MCF 10A (cell line): ENCODE measurements at regions of chr2 and their contacts with region 1.

Region 1: DNA sequence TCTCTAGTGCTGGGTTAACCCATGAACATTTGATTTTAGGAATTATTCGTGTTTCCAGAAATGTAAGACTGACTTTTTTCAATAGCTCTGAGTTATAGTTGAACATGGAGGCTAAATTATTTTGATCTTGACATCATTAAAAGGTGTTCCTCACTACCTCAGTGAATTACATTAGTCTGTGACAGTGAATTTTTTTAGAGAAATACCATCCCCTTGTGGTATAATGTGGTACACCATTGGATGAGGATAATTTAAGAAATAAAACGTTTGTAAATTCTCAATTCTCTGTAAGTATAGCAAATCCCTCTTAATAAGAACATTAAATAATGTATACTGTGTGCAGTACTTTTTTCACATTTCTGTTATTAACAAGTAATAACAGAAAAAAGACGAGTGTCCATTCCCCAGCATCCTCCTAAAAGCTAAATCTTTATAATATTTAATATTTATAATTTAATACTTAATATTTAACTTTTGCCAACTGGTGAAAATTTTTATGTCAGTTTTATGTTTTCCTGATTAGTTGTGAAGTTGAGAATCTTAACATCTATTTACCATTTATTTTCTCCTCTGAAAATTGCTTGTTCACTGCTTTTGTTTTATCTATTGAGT is 70.3 kb upstream of the CWC22 start:
- DNase-seq: peak; percentile 37
- H3K4me3 Mint-ChIP-seq: no peak overlapping the region
- H3K27ac Mint-ChIP-seq: no peak overlapping the region
- H3K4me1 Mint-ChIP-seq: no peaks in the 10 kb centered on the region
- H3K27me3 Mint-ChIP-seq: no peaks in the 10 kb centered on the region
- CTCF ChIP-seq: peak; percentile 76

Region 2: GRCh38 chr2:179422037-179422643 is 655.3 kb before region 1 on chr2:
- CTCF ChIA-PET with region 1: interaction called, 3 read pairs
- POLR2A ChIA-PET with region 1: no interaction called
- intact Hi-C with region 1: loop called (anchors 5 kb)
- DNase-seq: peak; percentile 79
- H3K4me3 Mint-ChIP-seq: no peak overlapping the region
- H3K27ac Mint-ChIP-seq: no peak overlapping the region
- H3K4me1 Mint-ChIP-seq: no peaks in the 10 kb centered on the region
- H3K27me3 Mint-ChIP-seq: no peaks in the 10 kb centered on the region
- CTCF ChIP-seq: peak; percentile 73

Region 3: GRCh38 chr2:179842498-179843153 is 234.8 kb before region 1 on chr2:
- CTCF ChIA-PET with region 1: interaction called, 3 read pairs
- POLR2A ChIA-PET with region 1: interaction called, 3 read pairs
- intact Hi-C with region 1: loop called (anchors 5 kb)
- DNase-seq: no peak
- H3K4me3 Mint-ChIP-seq: no peak overlapping the region
- H3K27ac Mint-ChIP-seq: no peak overlapping the region
- H3K4me1 Mint-ChIP-seq: no peaks in the 10 kb centered on the region
- H3K27me3 Mint-ChIP-seq: no peaks in the 10 kb centered on the region
- CTCF ChIP-seq: no peak

Region 4: DNA sequence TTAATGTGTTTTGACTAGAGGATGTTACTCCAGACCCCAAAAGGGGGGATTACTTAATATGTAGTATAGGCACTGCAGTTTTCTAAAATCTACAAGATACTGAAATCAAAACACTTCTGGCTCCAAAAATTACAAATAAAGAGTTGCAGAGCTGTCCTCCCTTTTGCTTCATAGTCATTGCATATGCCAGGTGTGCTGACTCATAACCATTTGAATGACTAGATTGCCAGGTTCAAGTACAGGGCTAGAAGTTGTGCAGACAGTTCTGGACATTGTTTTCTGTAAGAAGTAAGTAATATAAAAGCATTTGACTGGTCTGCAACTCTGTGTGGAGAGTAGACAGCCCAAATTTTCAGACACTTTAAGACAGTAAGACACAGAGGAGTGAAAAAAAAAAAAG is 77.0 kb before region 1 on chr2:
- CTCF ChIA-PET with region 1: interaction called, 26 read pairs
- POLR2A ChIA-PET with region 1: no interaction called
- intact Hi-C with region 1: no loop called
- DNase-seq: peak; percentile 41
- H3K4me3 Mint-ChIP-seq: no peak overlapping the region
- H3K27ac Mint-ChIP-seq: no peak overlapping the region
- H3K4me1 Mint-ChIP-seq: peaks cover 47% of the 10 kb centered on the region
- H3K27me3 Mint-ChIP-seq: no peaks in the 10 kb centered on the region
- CTCF ChIP-seq: no peak

Region 5: DNA sequence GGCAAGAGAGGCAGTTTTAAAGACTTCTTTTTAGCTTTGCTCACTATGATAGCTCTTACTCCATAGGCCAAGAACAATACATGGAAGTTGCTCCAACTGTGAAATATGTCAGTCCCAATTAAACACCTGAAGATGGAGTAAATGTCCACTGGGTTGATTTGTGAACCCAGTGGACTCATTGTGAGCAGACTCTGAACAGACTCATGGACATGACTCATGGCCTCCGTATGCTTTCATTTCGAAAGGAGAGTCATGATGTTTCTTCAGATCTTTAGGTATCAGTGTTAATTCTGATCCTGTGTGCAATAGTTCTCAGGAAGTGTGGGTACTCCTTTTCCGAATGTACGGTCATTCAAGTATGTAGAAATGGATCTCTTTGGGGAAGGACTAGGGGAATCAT is 64.9 kb before region 1 on chr2:
- CTCF ChIA-PET with region 1: interaction called, 37 read pairs
- POLR2A ChIA-PET with region 1: interaction called, 5 read pairs
- intact Hi-C with region 1: loop called (anchors 1 kb)
- DNase-seq: peak; percentile 94
- H3K4me3 Mint-ChIP-seq: peak overlapping the region; percentile 52
- H3K27ac Mint-ChIP-seq: peak overlapping the region; percentile 77
- H3K4me1 Mint-ChIP-seq: peaks cover 27% of the 10 kb centered on the region
- H3K27me3 Mint-ChIP-seq: no peaks in the 10 kb centered on the region
- CTCF ChIP-seq: peak; percentile 22

Region 6: GRCh38 chr2:180094050-180094449 is 16.6 kb after region 1 on chr2:
- CTCF ChIA-PET with region 1: no interaction called
- POLR2A ChIA-PET with region 1: no interaction called
- intact Hi-C with region 1: no loop called
- DNase-seq: no peak
- H3K4me3 Mint-ChIP-seq: no peak overlapping the region
- H3K27ac Mint-ChIP-seq: no peak overlapping the region
- H3K4me1 Mint-ChIP-seq: no peaks in the 10 kb centered on the region
- H3K27me3 Mint-ChIP-seq: no peaks in the 10 kb centered on the region
- CTCF ChIP-seq: no peak